PC-3 (cell line): ENCODE measurements at regions of chr1 and their contacts with region 1.

Region 1: DNA sequence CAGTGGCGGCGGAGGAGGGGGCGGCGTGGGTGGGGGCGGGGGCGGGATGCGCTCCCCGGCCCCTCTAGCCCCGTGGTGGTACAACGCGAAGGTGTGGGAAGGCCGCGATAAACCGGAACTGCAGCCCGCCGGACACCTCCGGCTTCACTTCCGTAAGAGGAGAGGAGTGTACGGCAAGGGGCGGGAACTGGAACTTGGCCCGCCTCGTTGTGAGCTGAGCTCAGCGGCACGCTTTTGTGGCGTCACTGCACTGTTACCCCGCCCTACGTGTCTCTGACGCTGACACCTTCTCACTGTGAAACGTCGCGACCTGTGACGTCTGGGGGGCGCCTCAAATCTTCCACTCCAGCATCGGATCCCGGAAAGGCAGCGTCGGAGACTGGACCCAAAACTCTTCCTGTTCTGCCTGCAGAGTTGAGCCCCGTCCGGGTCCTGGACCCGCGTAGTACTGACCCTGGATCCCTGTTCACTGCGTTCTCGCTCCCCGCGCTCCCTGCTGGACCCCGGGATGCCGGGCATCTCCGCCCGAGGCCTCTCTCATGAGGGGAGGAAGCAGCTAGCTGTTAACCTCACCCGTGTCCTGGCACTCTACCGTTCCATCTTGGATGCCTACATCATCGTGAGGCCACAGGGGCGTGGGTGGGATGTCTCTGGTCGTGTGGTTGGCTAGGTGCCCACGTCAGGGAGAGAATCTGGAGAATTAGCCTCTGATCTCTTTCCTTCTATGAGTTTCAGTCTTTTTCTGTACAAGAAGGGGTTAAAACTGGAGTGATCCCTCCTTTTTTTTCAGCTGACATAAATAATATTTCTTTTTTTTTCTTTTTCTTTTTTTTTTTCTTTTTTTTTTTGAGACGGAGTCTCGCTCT is at the start of gene ISG20L2:
- DNase-seq: peak; percentile 98
- ATAC-seq: peak; percentile 78
- H3K4me3 ChIP-seq: peak within 1 kb of the TSS; percentile 98
- H3K27ac ChIP-seq: peak within 1 kb of the TSS; percentile 67
- H3K4me1 ChIP-seq: peaks cover 27% of the 10 kb centered on the region
- H3K27me3 ChIP-seq: no peaks in the 10 kb centered on the region
- CTCF ChIP-seq: no peak
- total RNA-seq, gene ISG20L2: 39.2 and 51.7 TPM in 2 replicates

Region 2: GRCh38 chr1:156659994-156660751 is 68.7 kb before region 1 on chr1:
- CTCF ChIA-PET with region 1: interaction called, 5 read pairs
- POLR2A ChIA-PET with region 1: no interaction called
- intact Hi-C with region 1: loop called (anchors 1 kb)
- DNase-seq: peak; percentile 99
- ATAC-seq: peak; percentile 70
- H3K4me3 ChIP-seq: peak overlapping the region; percentile 64
- H3K27ac ChIP-seq: peak overlapping the region; percentile 66
- H3K4me1 ChIP-seq: peaks cover 52% of the 10 kb centered on the region
- H3K27me3 ChIP-seq: 0 out of 2 replicates have a peak, but pooled peaks cover 3% of the 10 kb centered on the region
- CTCF ChIP-seq: peak; percentile 100

Region 3: DNA sequence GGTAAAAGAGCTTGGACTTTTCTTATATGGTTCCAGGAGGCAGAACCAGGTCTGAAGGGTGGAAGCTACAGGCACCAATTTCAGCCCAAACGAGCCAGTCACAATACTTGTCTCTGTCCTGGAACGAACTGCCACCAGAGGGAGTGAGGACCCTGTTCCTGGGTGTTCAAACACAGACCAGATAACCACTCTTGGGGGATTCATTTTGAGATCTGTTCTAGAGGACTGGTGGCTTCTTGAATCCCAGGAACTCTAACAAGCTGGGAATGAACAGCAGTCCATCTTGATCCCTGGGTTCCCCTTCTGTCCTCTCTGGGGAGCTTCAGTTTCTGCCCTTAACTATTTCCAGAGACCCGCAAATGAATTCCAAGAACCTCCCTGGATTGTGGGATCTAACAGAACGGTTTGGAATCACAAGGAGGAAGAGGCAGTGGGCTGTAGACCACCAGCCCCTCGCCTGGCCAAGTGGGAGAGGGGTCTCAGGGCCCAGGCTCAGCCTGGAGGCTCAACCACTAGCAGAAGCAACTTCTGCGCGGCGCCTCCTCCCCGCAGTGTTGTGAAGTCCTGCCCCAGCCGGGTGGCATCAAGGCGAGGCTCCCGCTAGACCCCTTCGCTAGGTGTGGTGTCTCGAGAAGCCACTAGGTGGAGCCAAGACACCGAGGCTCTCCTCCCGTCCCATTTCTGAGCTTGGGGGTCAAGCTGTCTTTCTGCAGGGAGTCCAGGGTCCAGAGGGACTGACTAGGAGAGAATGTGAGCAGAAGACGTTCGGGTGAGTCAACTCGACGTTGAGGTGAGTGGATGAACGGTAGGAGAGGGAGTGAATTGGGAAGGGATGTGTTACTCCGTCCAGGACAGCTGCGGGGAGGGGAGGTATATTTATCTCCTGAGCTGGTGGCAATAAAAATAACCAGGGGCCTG is 39.5 kb before region 1 on chr1:
- CTCF ChIA-PET with region 1: interaction called, 106 read pairs
- POLR2A ChIA-PET with region 1: interaction called, 13 read pairs
- intact Hi-C with region 1: loop called (anchors 1 kb)
- DNase-seq: peak; percentile 97
- ATAC-seq: peak; percentile 81
- H3K4me3 ChIP-seq: peak overlapping the region; percentile 68
- H3K27ac ChIP-seq: no peak overlapping the region
- H3K4me1 ChIP-seq: peaks cover 62% of the 10 kb centered on the region
- H3K27me3 ChIP-seq: no peaks in the 10 kb centered on the region
- CTCF ChIP-seq: peak; percentile 88

Region 4: GRCh38 chr1:156740679-156741612 is 12.1 kb after region 1 on chr1 and contains the start of gene MRPL24:
- CTCF ChIA-PET with region 1: interaction called, 11 read pairs
- POLR2A ChIA-PET with region 1: interaction called, 28 read pairs
- intact Hi-C with region 1: loop called (anchors 1 kb)
- DNase-seq: peak; percentile 99
- ATAC-seq: peak; percentile 89
- H3K4me3 ChIP-seq: peak within 1 kb of the TSS; percentile 78
- H3K27ac ChIP-seq: peak within 1 kb of the TSS; percentile 61
- H3K4me1 ChIP-seq: peaks cover 22% of the 10 kb centered on the region
- H3K27me3 ChIP-seq: no peaks in the 10 kb centered on the region
- CTCF ChIP-seq: no peak
- total RNA-seq, gene MRPL24: 232 and 275 TPM in 2 replicates

Region 5: DNA sequence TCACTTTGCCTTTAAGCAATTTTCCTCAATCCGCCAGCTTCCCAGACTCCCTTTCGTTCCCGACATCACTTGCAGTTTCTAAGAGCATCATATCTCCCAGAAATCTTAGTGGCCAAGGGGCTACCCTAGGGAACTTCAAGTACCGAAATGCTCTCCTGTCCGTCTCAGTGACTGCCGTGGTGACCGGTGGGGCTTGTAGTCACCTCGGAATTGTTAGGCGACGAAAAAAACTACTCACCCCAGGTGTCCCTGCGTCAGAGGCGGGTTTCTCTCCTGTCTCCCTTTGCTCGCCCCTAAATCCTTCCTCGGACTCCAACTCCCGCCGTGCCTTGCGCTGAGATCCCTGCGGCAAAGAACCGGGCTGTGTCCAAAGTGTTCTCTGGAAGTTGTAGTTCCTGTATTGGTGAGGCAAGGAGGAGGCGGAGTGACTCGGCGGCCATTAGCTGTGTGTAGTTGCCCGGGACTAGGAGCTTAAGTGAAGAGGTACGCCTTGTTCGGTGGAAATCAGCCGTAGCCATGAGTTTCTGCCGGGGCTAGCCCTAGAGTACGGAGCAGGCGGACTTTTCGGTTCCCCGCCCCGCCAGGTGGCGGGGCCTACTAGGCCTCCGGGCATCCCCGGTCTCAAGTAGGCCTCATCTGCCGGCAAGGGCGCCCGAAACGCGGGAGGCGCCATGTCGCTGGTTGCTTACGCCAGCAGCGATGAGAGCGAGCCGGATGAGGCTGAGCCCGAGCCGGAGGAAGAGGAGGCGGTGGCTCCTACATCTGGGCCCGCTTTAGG is 38.5 kb after region 1 on chr1 and contains the start of gene PRCC:
- CTCF ChIA-PET with region 1: interaction called, 10 read pairs
- POLR2A ChIA-PET with region 1: interaction called, 6 read pairs
- intact Hi-C with region 1: loop called (anchors 1 kb)
- DNase-seq: peak; percentile 100
- ATAC-seq: peak; percentile 93
- H3K4me3 ChIP-seq: peak within 1 kb of the TSS; percentile 74
- H3K27ac ChIP-seq: peak within 1 kb of the TSS; percentile 74
- H3K4me1 ChIP-seq: peaks cover 31% of the 10 kb centered on the region
- H3K27me3 ChIP-seq: no peaks in the 10 kb centered on the region
- CTCF ChIP-seq: no peak
- total RNA-seq, gene PRCC: 103 TPM in 2 replicates

Region 6: DNA sequence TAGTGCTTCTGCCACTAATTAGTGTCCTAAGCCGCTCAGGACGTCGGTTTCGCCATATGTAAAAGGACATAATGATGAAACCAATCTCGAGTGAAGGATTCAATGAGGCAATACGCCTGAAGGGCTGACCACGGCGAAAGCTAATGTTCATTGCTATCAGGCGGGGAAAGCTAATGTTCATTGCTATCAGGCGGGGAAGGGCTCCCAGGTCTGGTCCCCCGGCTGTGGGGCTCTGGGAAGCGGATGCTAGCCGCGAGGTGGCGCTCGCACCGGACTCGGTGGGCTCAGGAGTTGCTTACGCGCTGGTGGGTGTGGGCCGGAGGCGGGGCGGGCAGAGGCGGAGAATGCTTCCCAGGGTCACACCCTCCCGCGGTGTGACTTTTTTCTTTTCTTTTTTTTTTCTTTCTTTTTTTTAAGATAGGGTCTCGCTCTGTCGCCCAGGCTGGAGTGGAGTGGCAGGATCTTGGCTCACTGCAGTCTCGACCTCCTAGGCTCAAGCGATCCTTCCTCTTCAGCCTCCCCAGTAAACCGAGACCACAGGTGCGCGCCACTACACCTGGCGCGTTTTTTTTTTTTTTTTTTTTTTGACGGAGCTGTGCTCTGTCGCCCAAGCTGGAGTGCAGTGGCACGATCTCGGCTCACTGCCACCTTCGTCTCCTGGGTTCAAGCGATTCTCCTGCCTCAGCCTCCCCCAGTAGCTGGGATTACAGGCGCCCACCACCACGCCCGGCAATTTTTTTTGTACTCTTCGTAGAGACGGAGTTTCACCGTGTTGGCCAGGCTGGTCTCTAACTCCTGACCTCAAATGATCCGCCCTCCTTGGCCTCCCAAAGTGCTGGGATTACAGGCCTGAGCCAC is 163.6 kb after region 1 on chr1:
- CTCF ChIA-PET with region 1: no interaction called
- POLR2A ChIA-PET with region 1: interaction called, 3 read pairs
- intact Hi-C with region 1: loop called (anchors 1 kb)
- DNase-seq: peak; percentile 95
- ATAC-seq: peak; percentile 71
- H3K4me3 ChIP-seq: peak overlapping the region; percentile 54
- H3K27ac ChIP-seq: no peak overlapping the region
- H3K4me1 ChIP-seq: peaks cover 19% of the 10 kb centered on the region
- H3K27me3 ChIP-seq: no peaks in the 10 kb centered on the region
- CTCF ChIP-seq: peak; percentile 91